CD8-positive, alpha-beta memory T cell (primary cell): ENCODE measurements at regions of chr6 and their contacts with region 1.

Region 1: DNA sequence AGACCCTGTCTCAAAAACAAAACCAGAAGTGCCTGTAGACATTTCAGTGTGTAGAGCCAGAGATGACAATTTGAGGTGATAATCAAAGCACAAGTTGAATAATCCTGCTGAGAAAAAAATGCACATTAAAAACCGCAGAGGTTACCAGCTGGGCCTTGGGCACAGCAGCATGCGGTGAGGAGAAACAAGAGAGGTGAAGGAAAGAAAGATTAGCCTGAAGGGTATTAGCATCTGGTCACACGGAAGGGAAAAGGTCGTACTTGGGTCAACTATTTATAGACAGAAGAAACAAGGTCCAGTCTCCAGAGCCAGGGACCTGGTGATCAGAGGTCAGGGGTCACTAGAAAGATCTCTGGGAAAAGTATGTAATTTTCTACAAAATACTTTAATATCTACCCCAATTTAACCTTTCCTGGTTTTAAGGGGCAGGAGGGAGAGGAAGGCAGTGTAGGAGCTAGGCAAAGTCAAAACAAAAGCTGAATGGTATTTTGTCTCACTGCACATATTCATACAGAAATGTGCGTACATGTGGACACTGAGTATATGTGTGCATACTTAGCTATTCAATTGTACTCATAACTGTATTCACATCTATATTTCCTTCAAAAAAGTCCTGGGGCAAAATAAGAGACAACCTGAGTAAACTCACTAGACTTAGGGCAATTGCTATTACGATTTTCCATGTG is 10.1 kb downstream of the MAP7 start:
- DNase-seq: no peak
- H3K4me3 ChIP-seq: no peak overlapping the region
- H3K4me3 Mint-ChIP-seq: no peak overlapping the region
- H3K27ac ChIP-seq: no peak overlapping the region
- H3K27ac Mint-ChIP-seq: no peak overlapping the region
- H3K4me1 ChIP-seq: no peaks in the 10 kb centered on the region
- H3K4me1 Mint-ChIP-seq: no peaks in the 10 kb centered on the region
- H3K27me3 ChIP-seq: no peaks in the 10 kb centered on the region
- H3K27me3 Mint-ChIP-seq: peaks cover 19 to 39% of the 10 kb centered on the region in 2 donors

Region 2: GRCh38 chr6:136550330-136551071 is 10.4 kb after region 1 on chr6 and contains the start of gene MAP7:
- CTCF ChIA-PET with region 1: interaction called, 20 read pairs
- POLR2A ChIA-PET with region 1: no interaction called
- DNase-seq: peak; percentile 43 to 72 (median 68)
- H3K4me3 ChIP-seq: peak within 1 kb of the TSS; percentile 33
- H3K4me3 Mint-ChIP-seq: peak within 1 kb of the TSS; percentile 67 to 89 (median 74)
- H3K27ac ChIP-seq: no peak within 1 kb of the TSS
- H3K27ac Mint-ChIP-seq: peak within 1 kb of the TSS in 5 of 8 donors; percentile 15 to 65 (median 55)
- H3K4me1 ChIP-seq: peaks cover 13% of the 10 kb centered on the region
- H3K4me1 Mint-ChIP-seq: peaks cover 9 to 15% (median 14%) of the 10 kb centered on the region in 3 donors
- H3K27me3 ChIP-seq: peaks cover 23% of the 10 kb centered on the region
- H3K27me3 Mint-ChIP-seq: peaks cover 19 to 37% of the 10 kb centered on the region in 2 donors
- total RNA-seq, gene MAP7: 0.50 to 0.51 TPM